Ascending aorta (tissue), 2 donors: ENCODE measurements at regions of chr4 and their contacts with region 1.

Region 1: DNA sequence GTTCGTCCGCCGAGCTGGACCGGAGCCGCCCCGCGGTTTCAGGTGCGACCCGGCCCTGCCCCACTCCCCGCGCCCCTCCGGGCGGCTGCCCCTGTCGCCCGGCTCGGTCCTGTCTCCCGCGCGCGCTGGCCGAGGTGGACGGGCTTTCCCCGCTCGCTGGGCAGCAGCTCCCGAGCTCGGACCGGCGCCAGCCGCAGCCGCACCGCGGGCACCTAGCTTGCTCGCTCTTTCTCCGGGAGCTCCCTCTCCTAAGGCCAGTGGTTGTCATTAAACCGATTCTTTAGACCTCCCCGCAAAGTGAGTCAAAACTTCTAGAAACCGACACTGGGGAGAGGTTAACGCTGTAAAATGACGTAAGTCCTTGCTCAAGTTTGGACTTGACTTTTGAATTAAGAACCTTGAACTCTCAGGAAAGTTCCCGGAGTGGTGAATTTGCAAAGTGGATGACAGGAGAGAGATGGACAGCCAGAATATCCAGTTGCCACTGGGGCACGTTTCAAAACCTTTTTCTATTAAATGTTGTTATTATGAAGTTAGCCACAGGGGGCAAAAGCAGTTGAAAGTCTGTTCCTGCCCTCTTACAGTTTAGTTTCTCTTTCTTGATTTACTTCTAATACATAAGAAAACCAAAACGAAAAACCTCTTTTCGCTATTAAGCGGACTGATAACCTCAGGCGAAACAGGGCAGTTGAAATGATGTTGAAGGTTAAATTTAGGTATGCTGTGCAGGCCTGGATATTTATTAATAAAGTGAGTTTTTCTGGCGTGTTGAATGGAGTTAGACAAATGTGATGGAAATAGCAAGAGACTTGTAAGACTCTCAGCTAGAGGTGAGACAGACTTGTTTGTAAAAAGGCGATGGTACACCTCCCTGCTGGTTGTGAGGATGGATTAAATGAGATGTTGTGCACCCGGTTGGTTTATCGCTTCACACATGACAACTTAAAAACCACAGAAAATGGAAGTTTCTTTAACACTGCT is 847 bp downstream of the PI4K2B start:
- DNase-seq: peak in 1 of 2 donors; percentile 70
- H3K4me3 ChIP-seq: peak overlapping the region; percentile 81 to 100
- H3K27ac ChIP-seq: peak overlapping the region; percentile 96 to 99
- H3K4me1 ChIP-seq: peaks cover 0 to 8% of the 10 kb centered on the region in 2 donors
- H3K27me3 ChIP-seq: no peaks in the 10 kb centered on the region
- CTCF ChIP-seq: peak in 2 of 3 experiments; percentile 54 to 55

Region 2: DNA sequence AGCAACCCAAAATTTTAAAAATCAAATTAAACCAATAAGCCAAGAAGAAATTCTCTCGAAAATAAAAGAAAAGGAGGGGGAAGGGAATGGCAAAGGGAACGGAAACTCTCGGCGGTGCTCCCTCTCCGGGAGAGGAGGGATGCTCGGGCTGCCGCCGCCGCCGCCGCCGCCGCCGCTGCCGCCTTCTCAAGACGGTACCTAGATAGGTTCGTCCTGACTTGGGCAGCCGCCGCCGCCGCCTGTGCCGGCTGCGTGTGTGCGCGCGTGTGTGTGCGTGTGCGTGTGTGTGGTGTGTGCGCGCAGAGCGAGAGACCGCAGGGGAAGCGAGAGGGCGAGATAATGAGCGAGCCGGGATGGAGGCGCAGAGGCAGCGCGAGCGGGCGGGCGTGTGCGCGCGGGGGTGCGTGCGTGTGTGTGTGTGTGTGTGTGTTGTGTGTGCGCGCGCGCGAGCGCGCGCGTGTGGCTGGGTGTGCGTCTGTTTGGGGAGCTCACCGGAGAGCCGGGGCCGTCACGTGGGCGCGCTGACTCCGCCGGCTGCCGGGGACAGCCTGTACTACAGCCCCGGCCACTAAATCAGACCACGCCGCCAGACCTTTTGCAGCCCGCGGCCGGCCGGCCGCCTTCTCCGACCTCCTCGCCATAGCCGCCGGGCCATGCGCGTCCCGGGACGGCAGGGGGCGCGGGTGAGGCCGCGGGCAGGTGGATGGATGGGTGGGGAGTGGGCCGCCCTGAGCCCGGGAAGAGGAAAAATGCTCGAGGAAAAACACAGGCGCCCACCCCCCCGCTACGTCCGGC is 762.0 kb before region 1 on chr4:
- intact Hi-C with region 1: loop called (anchors 10 kb)
- DNase-seq: peak; percentile 31 to 88
- H3K4me3 ChIP-seq: peak overlapping the region; percentile 60 to 81
- H3K27ac ChIP-seq: peak overlapping the region; percentile 31 to 57
- H3K4me1 ChIP-seq: peaks cover 8 to 15% of the 10 kb centered on the region in 2 donors
- H3K27me3 ChIP-seq: no peaks in the 10 kb centered on the region
- CTCF ChIP-seq: peak; percentile 54 to 73 (median 66)

Region 3: DNA sequence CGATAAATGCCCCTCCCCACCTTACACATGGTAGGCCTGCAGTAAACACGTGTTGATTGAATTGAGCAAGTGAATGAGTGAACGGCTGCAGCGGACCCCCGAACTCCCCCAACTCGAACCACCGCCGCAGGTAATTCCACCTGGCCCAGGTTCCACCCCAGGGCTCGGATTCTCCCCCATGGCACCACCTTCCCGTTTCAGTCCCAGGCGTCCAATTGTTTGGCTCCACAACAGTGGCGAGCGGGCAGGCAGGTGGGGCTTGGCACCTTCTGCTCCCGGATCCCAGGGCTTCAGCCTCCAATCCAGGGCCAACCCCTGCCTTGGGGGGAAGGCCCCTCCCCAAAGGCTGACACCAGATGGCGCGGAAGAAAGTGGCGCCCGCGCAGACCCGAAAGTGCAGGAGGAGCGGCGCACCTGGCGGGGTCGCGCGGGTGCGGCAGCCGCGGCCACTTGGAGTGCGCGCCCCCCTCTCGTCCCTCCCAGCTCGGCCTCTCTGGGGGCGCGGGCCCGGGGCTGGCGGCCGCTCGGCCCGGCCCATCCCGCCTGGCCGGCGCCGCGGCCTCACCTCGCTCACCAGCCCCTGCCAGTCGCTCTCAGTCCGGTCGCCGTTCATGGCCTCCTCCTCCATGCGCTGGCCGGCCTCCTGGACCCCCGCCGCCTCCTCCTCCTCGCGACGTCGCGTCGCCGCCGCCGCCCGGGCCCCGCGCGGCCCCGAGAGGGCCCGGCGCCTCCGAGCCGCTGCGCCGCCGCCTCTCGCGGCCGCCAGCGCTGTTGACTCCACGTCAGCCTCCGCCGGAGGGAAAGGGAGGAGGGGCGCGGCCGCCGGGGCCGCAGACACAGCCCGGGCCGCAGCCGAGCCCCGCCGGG is 322.2 kb before region 1 on chr4 and contains the start of gene CCDC149:
- intact Hi-C with region 1: loop called (anchors 5 kb)
- DNase-seq: peak in 1 of 2 donors; percentile 83
- H3K4me3 ChIP-seq: peak within 1 kb of the TSS; percentile 91 to 93
- H3K27ac ChIP-seq: peak within 1 kb of the TSS; percentile 93 to 97
- H3K4me1 ChIP-seq: peaks cover 0 to 8% of the 10 kb centered on the region in 2 donors
- H3K27me3 ChIP-seq: no peaks in the 10 kb centered on the region
- CTCF ChIP-seq: no peak
- total RNA-seq, gene CCDC149: 8.7 TPM

Region 4: GRCh38 chr4:25159884-25160713 is 74.6 kb before region 1 on chr4 and contains the start of gene SEPSECS:
- intact Hi-C with region 1: loop called (anchors 1 kb)
- DNase-seq: peak; percentile 90 to 98
- H3K4me3 ChIP-seq: peak within 1 kb of the TSS; percentile 76 to 86
- H3K27ac ChIP-seq: peak within 1 kb of the TSS; percentile 95 to 97
- H3K4me1 ChIP-seq: peaks cover 3 to 15% of the 10 kb centered on the region in 2 donors
- H3K27me3 ChIP-seq: no peaks in the 10 kb centered on the region
- CTCF ChIP-seq: no peak
- total RNA-seq, gene SEPSECS: 5.2 TPM

Region 5: GRCh38 chr4:25312496-25313200 is 78.0 kb after region 1 on chr4 and contains the start of gene ZCCHC4:
- intact Hi-C with region 1: loop called (anchors 1 kb)
- DNase-seq: peak; percentile 43 to 94
- H3K4me3 ChIP-seq: peak within 1 kb of the TSS; percentile 67 to 85
- H3K27ac ChIP-seq: peak within 1 kb of the TSS in 1 of 2 donors; percentile 78
- H3K4me1 ChIP-seq: peaks cover 0 to 6% of the 10 kb centered on the region in 2 donors
- H3K27me3 ChIP-seq: no peaks in the 10 kb centered on the region
- CTCF ChIP-seq: peak; percentile 78 to 99 (median 92)
- total RNA-seq, gene ZCCHC4: 1.7 TPM

Region 6: DNA sequence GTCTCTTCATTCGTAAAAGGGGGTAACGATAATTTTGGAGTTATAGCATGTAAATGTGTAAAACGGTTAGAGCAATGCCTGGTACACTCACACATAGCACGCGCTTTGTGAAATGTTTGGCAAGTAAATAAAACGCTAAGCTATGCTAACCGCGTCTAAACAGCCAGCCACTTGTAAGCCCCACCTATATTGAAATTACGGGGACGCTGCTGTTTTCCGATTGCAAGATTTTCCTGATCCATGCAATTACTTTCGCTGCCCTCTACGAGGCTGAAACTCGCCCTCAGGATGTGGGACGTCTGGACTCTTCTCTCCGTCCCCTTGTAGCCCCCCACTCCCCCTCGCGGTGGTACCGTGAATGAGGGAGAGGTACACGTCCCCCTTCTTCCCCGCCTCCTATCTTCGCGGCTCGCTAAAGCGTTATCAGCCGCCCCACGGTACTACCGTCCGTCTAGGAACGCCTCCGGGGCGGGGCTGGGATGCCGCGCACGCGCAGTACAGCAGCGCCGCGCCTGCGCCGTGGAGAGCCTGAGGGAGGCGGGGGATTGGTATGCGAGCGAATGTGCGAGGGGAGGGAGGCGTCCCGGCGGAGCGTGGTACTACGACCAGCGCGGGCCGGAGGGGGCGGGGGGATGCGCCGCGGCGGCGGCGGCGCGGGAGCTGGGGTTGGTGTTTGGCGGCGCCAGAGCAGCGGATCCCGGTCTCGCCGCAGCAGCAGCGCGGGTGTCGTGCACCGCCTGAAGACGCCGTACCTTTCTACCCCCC is 1625.7 kb after region 1 on chr4 and contains the start of gene STIM2:
- intact Hi-C with region 1: loop called (anchors 10 kb)
- DNase-seq: peak; percentile 88 to 98
- H3K4me3 ChIP-seq: peak within 1 kb of the TSS; percentile 95 to 100
- H3K27ac ChIP-seq: peak within 1 kb of the TSS; percentile 92 to 98
- H3K4me1 ChIP-seq: peaks cover 7 to 20% of the 10 kb centered on the region in 2 donors
- H3K27me3 ChIP-seq: no peaks in the 10 kb centered on the region
- CTCF ChIP-seq: peak in 2 of 3 experiments; percentile 27 to 35
- total RNA-seq, gene STIM2: 17.2 TPM